Caco-2 (cell line): ENCODE measurements at regions of chr1 and their contacts with region 1.

Region 1: GRCh38 chr1:248825909-248826760 is at the start of gene SH3BP5L:
- DNase-seq: peak; percentile 89 to 93
- H3K4me3 ChIP-seq: peak within 1 kb of the TSS; percentile 82
- H3K4me3 Mint-ChIP-seq: peak within 1 kb of the TSS; percentile 95
- H3K27ac Mint-ChIP-seq: peak within 1 kb of the TSS; percentile 99
- H3K4me1 ChIP-seq: peaks cover 8% of the 10 kb centered on the region
- H3K4me1 Mint-ChIP-seq: peaks cover 19% of the 10 kb centered on the region
- H3K27me3 ChIP-seq: no peaks in the 10 kb centered on the region
- H3K27me3 Mint-ChIP-seq: no peaks in the 10 kb centered on the region
- CTCF ChIP-seq: peak; percentile 60 to 89
- total RNA-seq, gene SH3BP5L: 21.3 and 22.4 TPM in 2 replicates

Region 2: DNA sequence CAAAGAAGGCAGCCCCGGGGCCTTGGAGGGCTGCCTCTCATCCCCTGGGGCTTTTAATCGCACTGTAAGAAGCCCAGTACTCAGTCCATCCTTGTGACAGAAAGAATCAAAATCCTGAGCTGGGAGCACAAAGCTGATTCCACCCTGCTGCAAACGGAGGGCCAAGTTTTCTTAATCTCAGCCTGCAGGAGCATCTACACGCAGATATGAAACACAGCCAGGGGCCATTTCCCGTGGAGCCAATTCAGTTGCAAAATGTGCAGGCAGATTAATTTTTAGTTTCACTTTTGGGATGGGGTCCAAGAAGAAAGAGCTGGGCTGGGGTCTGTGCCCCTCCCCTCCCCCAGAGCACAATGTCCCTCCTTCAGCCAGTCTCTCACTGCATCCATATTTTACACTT is 75.0 kb before region 1 on chr1:
- CTCF ChIA-PET with region 1: no interaction called
- POLR2A ChIA-PET with region 1: no interaction called
- intact Hi-C with region 1: no loop called
- DNase-seq: no peak
- H3K4me3 ChIP-seq: no peak overlapping the region
- H3K4me3 Mint-ChIP-seq: no peak overlapping the region
- H3K27ac Mint-ChIP-seq: no peak overlapping the region
- H3K4me1 ChIP-seq: no peaks in the 10 kb centered on the region
- H3K4me1 Mint-ChIP-seq: no peaks in the 10 kb centered on the region
- H3K27me3 ChIP-seq: no peaks in the 10 kb centered on the region
- H3K27me3 Mint-ChIP-seq: no peaks in the 10 kb centered on the region
- CTCF ChIP-seq: no peak

Region 3: GRCh38 chr1:248837794-248838356 is 11.7 kb after region 1 on chr1 and contains the start of gene ZNF672:
- CTCF ChIA-PET with region 1: interaction called, 46 read pairs
- POLR2A ChIA-PET with region 1: interaction called, 57 read pairs
- intact Hi-C with region 1: loop called (anchors 1 kb)
- DNase-seq: peak; percentile 97 to 98
- H3K4me3 ChIP-seq: peak within 1 kb of the TSS; percentile 87
- H3K4me3 Mint-ChIP-seq: no peak within 1 kb of the TSS
- H3K27ac Mint-ChIP-seq: peak within 1 kb of the TSS; percentile 95
- H3K4me1 ChIP-seq: no peaks in the 10 kb centered on the region
- H3K4me1 Mint-ChIP-seq: no peaks in the 10 kb centered on the region
- H3K27me3 ChIP-seq: no peaks in the 10 kb centered on the region
- H3K27me3 Mint-ChIP-seq: peaks cover 3% of the 10 kb centered on the region
- CTCF ChIP-seq: no peak
- total RNA-seq, gene ZNF672: 27.3 and 29.1 TPM in 2 replicates

Region 4: DNA sequence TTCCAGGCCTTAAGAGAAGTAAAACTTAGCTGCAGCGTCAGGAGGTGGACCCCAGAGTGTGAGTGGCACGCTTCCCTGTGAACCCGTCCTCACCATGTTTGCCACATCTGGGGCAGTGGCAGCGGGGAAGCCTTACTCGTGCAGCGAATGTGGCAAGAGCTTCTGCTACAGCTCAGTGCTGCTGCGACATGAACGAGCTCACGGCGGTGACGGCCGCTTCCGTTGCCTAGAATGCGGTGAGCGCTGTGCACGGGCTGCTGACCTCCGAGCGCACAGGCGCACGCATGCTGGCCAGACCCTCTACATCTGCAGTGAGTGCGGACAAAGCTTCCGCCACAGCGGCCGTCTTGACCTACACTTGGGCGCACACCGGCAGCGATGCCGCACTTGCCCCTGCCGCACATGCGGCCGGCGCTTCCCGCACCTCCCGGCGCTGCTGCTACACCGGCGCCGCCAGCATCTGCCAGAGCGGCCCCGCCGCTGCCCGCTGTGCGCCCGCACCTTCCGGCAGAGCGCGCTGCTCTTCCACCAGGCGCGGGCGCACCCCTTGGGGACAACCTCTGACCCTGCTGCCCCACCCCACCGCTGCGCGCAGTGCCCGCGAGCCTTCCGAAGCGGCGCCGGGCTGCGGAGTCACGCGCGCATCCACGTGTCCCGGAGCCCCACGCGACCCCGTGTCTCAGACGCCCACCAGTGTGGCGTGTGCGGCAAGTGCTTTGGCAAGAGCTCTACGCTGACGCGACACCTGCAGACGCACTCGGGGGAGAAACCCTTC is 21.2 kb after region 1 on chr1:
- CTCF ChIA-PET with region 1: no interaction called
- POLR2A ChIA-PET with region 1: interaction called, 13 read pairs
- intact Hi-C with region 1: no loop called
- DNase-seq: no peak
- H3K4me3 ChIP-seq: no peak overlapping the region
- H3K4me3 Mint-ChIP-seq: no peak overlapping the region
- H3K27ac Mint-ChIP-seq: no peak overlapping the region
- H3K4me1 ChIP-seq: no peaks in the 10 kb centered on the region
- H3K4me1 Mint-ChIP-seq: no peaks in the 10 kb centered on the region
- H3K27me3 ChIP-seq: no peaks in the 10 kb centered on the region
- H3K27me3 Mint-ChIP-seq: no peaks in the 10 kb centered on the region
- CTCF ChIP-seq: no peak

Region 5: GRCh38 chr1:248858891-248859889 is 33.1 kb after region 1 on chr1 and contains the start of gene ZNF692:
- CTCF ChIA-PET with region 1: interaction called, 15 read pairs
- POLR2A ChIA-PET with region 1: interaction called, 9 read pairs
- intact Hi-C with region 1: loop called (anchors 1 kb)
- DNase-seq: peak; percentile 97
- H3K4me3 ChIP-seq: peak within 1 kb of the TSS; percentile 71
- H3K4me3 Mint-ChIP-seq: peak within 1 kb of the TSS; percentile 91
- H3K27ac Mint-ChIP-seq: peak within 1 kb of the TSS; percentile 87
- H3K4me1 ChIP-seq: peaks cover 25% of the 10 kb centered on the region
- H3K4me1 Mint-ChIP-seq: peaks cover 16% of the 10 kb centered on the region
- H3K27me3 ChIP-seq: no peaks in the 10 kb centered on the region
- H3K27me3 Mint-ChIP-seq: no peaks in the 10 kb centered on the region
- CTCF ChIP-seq: no peak
- total RNA-seq, gene ZNF692: 48.5 and 58.4 TPM in 2 replicates

Region 6: DNA sequence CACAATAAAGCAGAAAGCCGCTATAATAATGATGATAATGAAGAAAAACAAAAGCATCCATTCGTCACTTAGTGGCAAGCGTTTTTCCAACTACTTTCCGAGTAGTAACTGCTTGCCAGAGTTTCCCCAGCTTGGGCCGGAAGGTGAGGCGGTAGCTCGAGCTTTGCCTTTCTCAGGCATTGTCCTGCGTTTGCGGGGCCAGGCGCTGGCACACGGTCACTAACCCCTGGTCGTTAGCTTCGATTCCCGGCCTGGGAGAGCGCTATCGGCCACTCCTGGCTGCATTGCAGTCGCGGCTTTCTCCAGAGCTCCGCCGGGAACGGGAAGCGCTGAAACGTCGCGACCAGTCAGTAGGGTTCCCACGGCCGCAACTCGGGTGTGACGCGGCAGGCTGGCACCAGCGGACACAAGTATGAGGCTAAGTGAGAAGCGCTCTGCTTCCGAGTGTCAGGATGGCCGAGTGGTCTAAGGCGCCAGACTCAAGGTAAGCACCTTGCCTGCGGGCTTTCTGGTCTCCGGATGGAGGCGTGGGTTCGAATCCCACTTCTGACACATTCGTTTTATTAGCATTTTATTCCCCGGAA is 47.4 kb after region 1 on chr1:
- CTCF ChIA-PET with region 1: interaction called, 4 read pairs
- POLR2A ChIA-PET with region 1: interaction called, 5 read pairs
- intact Hi-C with region 1: loop called (anchors 1 kb)
- DNase-seq: peak; percentile 95 to 97
- H3K4me3 ChIP-seq: peak overlapping the region; percentile 40
- H3K4me3 Mint-ChIP-seq: peak overlapping the region; percentile 98
- H3K27ac Mint-ChIP-seq: peak overlapping the region; percentile 95
- H3K4me1 ChIP-seq: peaks cover 6% of the 10 kb centered on the region; the same call in 1 of the 2 replicates
- H3K4me1 Mint-ChIP-seq: peaks cover 25% of the 10 kb centered on the region
- H3K27me3 ChIP-seq: no peaks in the 10 kb centered on the region
- H3K27me3 Mint-ChIP-seq: peaks cover 4% of the 10 kb centered on the region
- CTCF ChIP-seq: no peak